ENCODE measurements at regions of chr12 and their contacts with region 1.

Region 1: DNA sequence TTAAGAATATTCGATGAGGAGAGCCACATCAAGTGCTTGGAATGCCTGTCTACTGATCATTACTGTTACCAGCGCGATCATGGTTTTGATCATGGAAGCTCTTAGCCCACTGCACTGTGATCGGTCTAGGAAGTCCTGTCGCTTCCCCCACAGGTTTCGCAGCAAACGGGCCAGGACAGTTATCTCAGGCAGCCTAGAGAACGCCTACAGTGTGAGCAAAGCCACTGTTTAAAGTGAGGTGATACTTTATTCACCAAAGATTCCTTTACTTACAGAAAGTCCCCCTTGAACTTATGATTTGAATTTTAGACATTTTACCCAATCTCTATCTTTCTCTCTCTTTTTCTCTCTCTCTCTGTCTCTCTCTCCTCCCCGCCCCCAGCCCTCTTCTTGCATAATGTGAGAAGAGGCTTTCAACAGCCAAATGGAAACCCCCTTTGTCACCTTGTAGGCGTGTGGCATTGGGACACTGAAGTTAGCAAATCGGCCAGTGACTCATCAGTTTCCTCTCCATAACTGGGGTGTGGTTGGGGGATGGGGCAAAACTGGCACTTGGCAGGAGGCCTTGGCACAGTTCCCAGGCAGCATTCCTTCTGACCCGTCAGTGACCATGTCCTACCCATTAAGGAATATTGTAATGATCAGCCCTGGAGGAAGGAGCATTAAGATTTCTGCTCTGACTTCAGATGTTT is 214.8 kb downstream of the CHST11 start:
- DNase-seq: peak; percentile 98
- ATAC-seq: peak; percentile 80
- H3K4me3 Mint-ChIP-seq: peak overlapping the region; percentile 70
- H3K27ac Mint-ChIP-seq: peak overlapping the region; percentile 97
- H3K4me1 Mint-ChIP-seq: peaks cover 60% of the 10 kb centered on the region
- H3K27me3 Mint-ChIP-seq: no peaks in the 10 kb centered on the region
- CTCF ChIP-seq: no peak

Region 2: GRCh38 chr12:104686196-104686595 is 14.6 kb after region 1 on chr12:
- CTCF ChIA-PET with region 1: no interaction called
- POLR2A ChIA-PET with region 1: interaction called, 11 read pairs
- intact Hi-C with region 1: no loop called
- DNase-seq: peak; percentile 13
- ATAC-seq: no peak
- H3K4me3 Mint-ChIP-seq: no peak overlapping the region
- H3K27ac Mint-ChIP-seq: peak overlapping the region; percentile 81
- H3K4me1 Mint-ChIP-seq: peaks cover 69% of the 10 kb centered on the region
- H3K27me3 Mint-ChIP-seq: no peaks in the 10 kb centered on the region
- CTCF ChIP-seq: no peak

Measured in activated CD8-positive, alpha-beta T cell treated with anti-CD3 and anti-CD28 coated beads for 36 hours (primary cell).